ENCODE measurements at regions of chr2 and their contacts with region 1.

Region 1: DNA sequence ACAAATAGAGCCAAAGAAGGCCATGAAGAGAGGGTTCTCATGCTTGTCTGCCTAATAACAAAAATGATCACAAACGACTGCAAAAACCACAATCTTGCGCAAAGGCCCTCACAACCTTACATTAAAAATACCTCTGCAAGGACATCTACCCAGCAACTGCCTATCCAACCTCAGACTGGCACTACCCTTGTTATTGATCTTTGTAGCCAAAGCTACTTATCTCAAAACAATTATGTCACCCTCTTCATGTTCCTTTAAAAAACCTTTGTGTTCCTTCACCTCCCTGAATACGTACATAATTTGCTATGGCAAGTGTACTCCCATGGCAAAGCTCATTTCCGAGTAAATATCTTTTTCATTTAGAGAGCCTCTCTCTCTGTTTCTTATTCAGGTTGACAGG is 44.1 kb downstream of the TMEM163 start:
- DNase-seq: no peak
- H3K4me3 ChIP-seq: no peak overlapping the region
- H3K27ac ChIP-seq: no peak overlapping the region
- H3K4me1 ChIP-seq: no peaks in the 10 kb centered on the region
- H3K27me3 ChIP-seq: no peaks in the 10 kb centered on the region
- CTCF ChIP-seq: no peak
- POLR2A ChIP-seq: no peak

Region 2: DNA sequence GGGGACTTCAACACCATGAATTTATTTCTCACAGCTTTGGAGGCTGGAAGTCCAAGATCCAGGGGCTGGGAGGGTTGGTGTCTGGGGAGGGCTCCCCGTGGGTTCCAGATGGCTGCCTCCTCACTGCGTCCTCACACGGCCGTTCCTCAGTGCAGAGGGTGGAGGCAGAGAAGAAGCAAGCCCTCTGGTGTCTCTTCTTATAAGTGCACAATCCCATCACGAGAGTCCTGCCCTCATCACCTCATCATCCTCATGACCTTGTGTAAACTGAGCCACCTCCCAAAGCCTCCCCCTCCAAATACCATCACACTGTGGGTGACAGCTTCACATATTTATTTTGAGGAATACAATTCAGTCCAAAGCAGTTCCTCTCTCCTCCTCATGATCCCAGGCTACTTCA is 17.8 kb after region 1 on chr2:
- intact Hi-C with region 1: loop called (anchors 1 kb)
- DNase-seq: no peak
- H3K4me3 ChIP-seq: no peak overlapping the region
- H3K27ac ChIP-seq: no peak overlapping the region
- H3K4me1 ChIP-seq: no peaks in the 10 kb centered on the region
- H3K27me3 ChIP-seq: no peaks in the 10 kb centered on the region
- CTCF ChIP-seq: no peak
- POLR2A ChIP-seq: no peak

Measured in breast epithelium (tissue), 4 donors.